Transverse colon (tissue), 4 donors: ENCODE measurements at regions of chr18 and their contacts with region 1.

Region 1: DNA sequence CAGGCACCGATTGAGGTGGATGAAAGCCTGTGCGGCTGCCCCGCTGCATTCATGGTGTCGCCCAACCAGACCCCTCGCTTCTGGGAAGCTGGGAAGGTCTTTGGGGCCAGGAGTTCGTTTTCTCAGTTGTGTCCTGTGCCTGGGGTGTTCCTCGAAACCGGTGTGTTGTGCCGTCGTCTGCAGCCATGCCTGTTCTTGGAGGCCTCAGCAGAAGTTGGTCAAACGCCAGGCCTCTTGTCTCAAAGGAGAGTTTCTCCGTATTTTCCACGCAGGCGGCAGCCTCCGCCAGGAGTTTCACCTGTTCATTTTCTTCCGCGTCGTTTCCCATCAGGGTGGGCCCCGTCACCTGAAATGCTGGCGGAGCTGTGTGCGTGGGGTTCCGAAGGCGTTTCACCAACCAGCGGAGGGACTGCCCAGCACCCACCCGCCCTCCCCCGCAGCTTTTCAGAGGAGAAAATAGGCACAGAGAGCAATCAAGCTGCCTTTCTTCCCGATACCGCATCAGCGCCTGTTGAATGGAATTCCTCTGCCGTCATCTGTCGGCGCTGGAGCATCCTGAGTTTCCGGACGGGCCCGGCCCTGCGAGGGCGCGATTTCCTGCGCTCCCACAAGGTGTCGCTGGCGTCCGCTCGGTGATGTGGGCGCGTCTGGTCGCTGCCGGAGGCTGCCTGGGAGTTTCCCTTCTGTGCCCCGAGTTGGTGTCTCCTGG is 17.0 kb upstream of the NFATC1 start:
- DNase-seq: peak; percentile 80
- H3K4me3 ChIP-seq: no peak overlapping the region
- H3K27ac ChIP-seq: no peak overlapping the region
- H3K4me1 ChIP-seq: peaks cover 0 to 4% (median 1%) of the 10 kb centered on the region in 4 donors
- H3K27me3 ChIP-seq: no peaks in the 10 kb centered on the region
- CTCF ChIP-seq: peak; percentile 91 to 98 (median 96)
- EP300 ChIP-seq: no peak
- POLR2A ChIP-seq: no peak

Region 2: GRCh38 chr18:79507076-79507545 is 128.4 kb after region 1 on chr18:
- in situ Hi-C with region 1: loop called in 1 of 4 experiments (anchors 25 kb)
- intact Hi-C with region 1: no loop called
- DNase-seq: peak; percentile 39
- H3K4me3 ChIP-seq: peak overlapping the region in 3 of 4 donors; percentile 1 to 35 (median 18)
- H3K27ac ChIP-seq: peak overlapping the region; percentile 79 to 87 (median 84)
- H3K4me1 ChIP-seq: peaks cover 14 to 34% (median 22%) of the 10 kb centered on the region in 4 donors
- H3K27me3 ChIP-seq: peaks cover 13% of the 10 kb centered on the region
- CTCF ChIP-seq: no peak
- EP300 ChIP-seq: no peak
- POLR2A ChIP-seq: no peak

Region 3: DNA sequence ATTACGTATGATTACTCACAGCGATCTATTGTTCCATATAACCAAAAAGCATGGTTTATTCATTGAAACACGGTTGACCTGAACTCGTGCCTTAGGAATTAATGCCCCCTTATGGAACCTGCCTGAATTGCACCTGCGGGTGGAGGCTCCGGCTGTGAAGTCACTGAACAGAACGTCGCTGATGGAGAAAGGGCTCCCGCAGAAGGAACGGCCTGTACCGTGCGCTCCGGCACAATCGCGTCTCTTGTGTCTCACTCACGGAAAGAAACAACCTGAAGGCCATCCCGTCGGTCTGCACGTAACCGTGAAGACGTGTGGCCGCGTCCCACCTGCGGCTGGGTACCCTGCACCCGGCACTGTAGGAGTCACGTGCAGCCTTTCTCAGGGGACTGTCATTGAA is 150.2 kb after region 1 on chr18:
- in situ Hi-C with region 1: loop called (anchors 5 to 25 kb)
- intact Hi-C with region 1: loop called (anchors 1 kb)
- DNase-seq: peak; percentile 64
- H3K4me3 ChIP-seq: no peak overlapping the region
- H3K27ac ChIP-seq: no peak overlapping the region
- H3K4me1 ChIP-seq: peaks cover 0 to 10% (median 3%) of the 10 kb centered on the region in 4 donors
- H3K27me3 ChIP-seq: peaks cover 9% of the 10 kb centered on the region
- CTCF ChIP-seq: peak; percentile 83 to 91 (median 88)
- EP300 ChIP-seq: no peak
- POLR2A ChIP-seq: no peak

Region 4: DNA sequence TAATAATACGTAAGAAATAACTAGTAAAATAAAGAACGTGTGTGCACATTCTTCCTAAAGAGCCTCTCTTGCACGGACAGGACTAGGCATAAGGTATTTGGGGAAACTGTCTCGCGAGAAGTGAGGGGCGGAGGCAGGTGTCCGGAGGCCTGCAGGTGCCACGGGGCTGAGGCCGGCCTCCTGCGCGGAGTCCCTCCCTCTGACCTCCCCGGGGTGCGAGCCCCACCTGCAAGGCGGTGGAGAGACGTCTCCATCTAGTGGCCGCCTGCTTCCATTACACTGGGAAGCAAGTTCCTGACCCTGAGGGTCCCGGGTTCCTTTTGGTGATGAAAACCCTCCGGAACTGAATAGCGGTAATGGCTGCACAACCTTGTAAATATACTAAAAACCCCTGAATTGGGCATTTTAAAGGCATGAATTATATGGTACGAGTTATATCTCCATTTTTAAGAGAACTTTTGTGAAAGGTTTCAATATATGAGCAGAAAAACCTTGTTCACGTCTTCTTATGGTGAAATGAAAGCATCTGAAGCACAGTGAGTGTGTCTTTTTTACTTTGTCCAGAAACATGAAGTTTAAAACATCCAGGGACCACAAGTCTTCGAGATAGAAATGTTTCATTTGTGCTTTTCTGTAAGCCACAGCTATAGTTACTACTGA is 265.4 kb after region 1 on chr18:
- in situ Hi-C with region 1: loop called in 2 of 4 experiments (anchors 10 to 25 kb)
- intact Hi-C with region 1: loop called (anchors 2 kb)
- DNase-seq: peak; percentile 64
- H3K4me3 ChIP-seq: no peak overlapping the region
- H3K27ac ChIP-seq: no peak overlapping the region
- H3K4me1 ChIP-seq: peaks cover 0 to 4% (median 0%) of the 10 kb centered on the region in 4 donors
- H3K27me3 ChIP-seq: peaks cover 10% of the 10 kb centered on the region
- CTCF ChIP-seq: peak; percentile 86 to 99 (median 94)
- EP300 ChIP-seq: no peak
- POLR2A ChIP-seq: no peak

Region 5: DNA sequence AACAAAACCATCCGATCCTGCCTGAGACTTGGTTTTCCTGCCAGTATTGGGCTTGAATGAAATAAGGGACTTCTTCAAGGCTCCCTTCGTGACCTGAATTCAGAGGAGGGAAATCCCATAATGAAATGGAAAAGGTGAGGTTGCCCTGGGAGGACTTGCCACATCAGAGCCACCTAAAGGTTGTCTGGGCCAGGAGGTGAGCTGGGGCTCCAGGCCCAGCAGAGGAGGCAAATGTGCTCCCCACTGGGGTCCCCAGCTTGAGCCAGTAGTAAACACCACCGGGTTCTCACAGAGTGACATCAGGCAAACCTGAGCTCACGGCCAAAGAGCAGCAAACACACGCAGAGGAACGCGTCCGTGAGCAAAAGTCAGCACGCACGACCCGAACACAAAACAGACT is 272.3 kb after region 1 on chr18:
- in situ Hi-C with region 1: loop called (anchors 5 to 25 kb)
- intact Hi-C with region 1: no loop called
- DNase-seq: no peak
- H3K4me3 ChIP-seq: no peak overlapping the region
- H3K27ac ChIP-seq: no peak overlapping the region
- H3K4me1 ChIP-seq: no peaks in the 10 kb centered on the region
- H3K27me3 ChIP-seq: no peaks in the 10 kb centered on the region
- CTCF ChIP-seq: no peak
- EP300 ChIP-seq: no peak
- POLR2A ChIP-seq: no peak

Region 6: DNA sequence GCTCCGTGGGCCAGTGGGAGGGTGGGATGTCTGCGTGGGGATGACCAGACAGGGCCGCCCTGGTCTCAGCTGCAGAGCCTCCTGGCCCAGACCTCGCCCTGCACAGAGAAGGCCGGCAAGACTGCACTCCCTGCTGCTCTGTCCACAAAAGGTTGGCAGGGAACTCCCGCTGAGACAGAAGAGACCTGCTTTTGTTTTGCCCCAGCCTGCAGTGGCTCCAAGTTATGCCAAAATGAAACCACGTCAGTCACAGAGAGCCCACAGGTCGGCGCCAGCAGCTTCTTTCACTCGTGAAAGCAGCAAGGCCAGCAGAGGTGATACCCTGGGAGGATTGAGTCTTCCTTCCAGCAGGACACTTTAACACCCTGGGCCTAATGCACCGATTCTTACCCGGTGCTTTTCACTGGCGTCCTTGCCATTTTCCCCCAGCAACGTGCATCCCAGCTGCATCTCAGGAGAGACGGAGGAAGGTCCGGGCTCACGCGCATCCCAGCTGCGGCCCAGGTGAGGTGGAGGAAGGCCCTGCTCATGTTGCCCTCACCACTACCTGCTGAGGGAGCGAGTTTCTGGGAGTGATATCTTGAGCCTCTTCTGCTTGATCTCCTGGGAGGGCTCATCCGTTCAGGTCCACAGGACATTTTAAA is 278.8 kb after region 1 on chr18:
- in situ Hi-C with region 1: loop called in 2 of 4 experiments (anchors 5 to 10 kb)
- intact Hi-C with region 1: no loop called
- DNase-seq: no peak
- H3K4me3 ChIP-seq: no peak overlapping the region
- H3K27ac ChIP-seq: no peak overlapping the region
- H3K4me1 ChIP-seq: no peaks in the 10 kb centered on the region
- H3K27me3 ChIP-seq: no peaks in the 10 kb centered on the region
- CTCF ChIP-seq: no peak
- EP300 ChIP-seq: no peak
- POLR2A ChIP-seq: no peak